ENCODE measurements at regions of chr12 and their contacts with region 1.

Region 1: GRCh38 chr12:123365025-123365917 is 624 bp upstream of the SBNO1 start:
- DNase-seq: peak; percentile 84
- H3K4me3 ChIP-seq: peak overlapping the region; percentile 87
- CTCF ChIP-seq: peak; percentile 87

Region 2: DNA sequence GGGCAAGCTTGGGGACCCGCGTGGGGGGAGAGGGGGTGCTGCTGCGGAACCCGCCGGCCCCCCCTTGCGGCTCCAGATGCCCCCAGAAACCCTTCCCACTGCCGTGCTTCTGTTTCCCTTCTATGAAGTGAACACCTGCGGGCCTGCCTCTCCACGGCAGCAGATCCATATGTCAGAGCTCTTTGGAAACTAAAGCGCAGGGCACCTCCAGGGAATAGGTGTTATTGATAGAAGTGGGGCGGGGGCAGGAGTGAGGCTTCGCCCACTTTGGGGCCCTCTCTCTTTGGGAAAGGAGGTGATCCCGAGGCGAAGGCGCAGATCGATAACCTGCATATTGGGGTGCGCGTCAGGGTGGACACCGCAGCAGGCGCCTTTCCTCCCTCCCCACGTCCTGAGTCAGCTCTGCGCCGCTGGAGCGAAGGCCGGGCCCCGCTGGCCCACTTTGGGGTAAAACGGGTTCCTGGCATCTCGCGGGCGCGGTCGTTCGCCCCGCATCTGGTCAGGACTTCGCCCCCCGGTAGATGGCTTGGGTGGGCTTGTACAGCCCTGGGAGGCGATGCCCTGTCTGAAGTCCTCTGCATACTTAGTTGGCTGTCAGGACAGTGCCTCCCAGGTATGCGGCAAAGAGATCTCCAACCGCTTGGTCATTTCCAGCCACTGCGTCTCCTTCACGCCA is 19.2 kb after region 1 on chr12:
- CTCF ChIA-PET with region 1: interaction called, 19 read pairs
- POLR2A ChIA-PET with region 1: interaction called, 19 read pairs
- DNase-seq: no peak
- H3K4me3 ChIP-seq: peak overlapping the region; percentile 78
- CTCF ChIP-seq: no peak

Region 3: DNA sequence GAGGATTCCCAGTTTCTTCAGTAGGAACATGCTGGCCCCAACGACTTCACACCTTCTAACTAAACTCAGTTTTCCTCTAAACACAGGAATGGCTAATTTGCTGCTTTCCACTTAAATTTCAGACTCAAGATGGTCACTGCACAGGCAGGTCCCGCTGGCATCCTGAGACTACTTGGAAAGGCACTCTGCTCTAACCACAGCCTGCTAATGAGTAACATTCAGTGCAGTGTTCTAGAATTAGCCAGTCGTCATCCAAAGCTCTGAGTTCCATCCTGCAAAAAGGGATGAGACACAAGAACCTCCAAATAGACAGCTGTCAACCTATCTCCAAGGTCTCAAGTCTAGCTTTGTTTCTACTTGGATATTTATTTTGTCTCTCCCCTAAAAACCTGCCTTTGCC is 601.3 kb after region 1 on chr12:
- CTCF ChIA-PET with region 1: no interaction called
- POLR2A ChIA-PET with region 1: no interaction called
- DNase-seq: peak; percentile 52
- H3K4me3 ChIP-seq: no peak overlapping the region
- CTCF ChIP-seq: no peak

Measured in AG04449 (cell line).